Left ventricle myocardium superior (tissue), 1 donor: ENCODE measurements at regions of chr14 and their contacts with region 1.

Region 1: GRCh38 chr14:29222671-29223268 is 456.2 kb downstream of the FOXG1 start:
- DNase-seq: no peak
- ATAC-seq: no peak

Region 2: DNA sequence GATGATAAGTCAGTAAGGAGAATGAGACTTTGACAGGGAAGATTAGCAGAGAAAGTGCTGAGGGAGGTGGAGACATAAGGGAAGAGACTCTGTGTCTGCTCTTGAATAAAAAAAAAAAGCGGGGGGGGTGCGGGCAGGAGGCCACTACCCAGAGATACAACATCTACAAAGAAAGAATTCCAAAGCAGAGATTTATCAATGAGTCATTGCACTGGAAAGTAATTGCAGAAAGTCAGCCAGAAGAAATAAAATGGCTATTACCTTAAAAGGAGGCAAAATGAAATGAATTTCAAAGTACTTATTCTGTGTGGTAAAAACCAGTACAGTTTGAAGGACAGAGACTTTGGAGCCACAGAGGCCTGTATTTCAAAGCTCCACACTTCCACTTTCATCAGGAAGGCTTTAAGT is 972.0 kb after region 1 on chr14:
- intact Hi-C with region 1: loop called (anchors 5 kb)
- DNase-seq: no peak
- ATAC-seq: peak; percentile 63